SK-N-SH (cell line): ENCODE measurements at regions of chr3 and their contacts with region 1.

Region 1: GRCh38 chr3:141311496-141312353 is 56.6 kb upstream of the ZBTB38 start:
- DNase-seq: peak; percentile 91
- H3K4me3 ChIP-seq: peak overlapping the region; percentile 73 to 77
- H3K27ac ChIP-seq: peak overlapping the region; percentile 44 to 82; a peak in 3 of 4 replicates
- H3K4me1 ChIP-seq: peaks cover 0 to 15% of the 10 kb centered on the region in 2 experiments; a peak in 2 of 4 replicates
- H3K27me3 ChIP-seq: no peaks in the 10 kb centered on the region
- CTCF ChIP-seq: peak; percentile 76
- EP300 ChIP-seq: 0 out of 4 replicates have a peak, but pooled peaks of 1 of the 2 experiments have one; percentile 26
- RAD21 ChIP-seq: peak; percentile 83

Region 2: DNA sequence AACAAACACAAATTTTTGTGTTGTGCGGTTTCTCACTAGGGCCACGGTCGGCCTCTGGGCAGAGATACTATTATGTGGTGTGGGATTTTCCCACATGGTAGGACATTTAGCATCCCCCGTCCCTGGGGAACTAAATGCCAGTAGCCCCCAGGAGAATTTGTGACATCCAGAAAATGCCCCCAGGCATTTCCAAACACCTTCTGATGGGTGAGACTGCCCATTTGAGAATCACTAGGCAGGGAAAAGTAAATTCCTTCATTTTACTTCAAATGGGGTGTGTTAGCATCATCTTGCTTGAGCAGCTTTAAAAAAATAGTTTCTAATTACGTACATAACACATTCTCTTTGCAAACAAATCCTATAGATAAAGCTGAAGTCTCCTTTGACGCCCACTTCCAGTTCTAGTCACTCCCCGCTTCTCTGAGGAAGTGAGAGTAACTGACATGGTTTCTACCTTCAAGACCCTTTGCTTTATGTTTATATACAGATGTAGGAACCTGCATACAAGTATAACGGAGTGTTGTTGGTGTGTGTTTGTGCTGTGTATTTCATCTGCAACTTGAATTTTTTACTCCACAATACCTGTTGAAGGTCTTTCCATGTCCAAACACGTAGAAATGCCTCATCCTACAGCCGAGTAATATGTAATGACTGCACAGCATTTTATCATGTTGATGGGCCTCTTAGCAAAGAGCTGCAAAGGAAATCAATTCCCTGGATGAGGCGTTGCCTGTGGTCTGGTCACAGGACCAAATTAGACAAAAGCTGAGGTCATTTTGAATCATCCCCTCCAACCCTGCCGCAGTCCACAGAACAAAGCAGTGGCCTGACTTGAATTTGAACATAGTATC is 25.2 kb after region 1 on chr3:
- CTCF ChIA-PET with region 1: interaction called, 10 read pairs
- POLR2A ChIA-PET with region 1: no interaction called
- DNase-seq: no peak
- H3K4me3 ChIP-seq: no peak overlapping the region
- H3K27ac ChIP-seq: peak overlapping the region in 1 of 2 experiments; percentile 60; a peak in 2 of 4 replicates
- H3K4me1 ChIP-seq: peaks cover 4 to 16% of the 10 kb centered on the region in 2 experiments; a peak in 3 of 4 replicates
- H3K27me3 ChIP-seq: no peaks in the 10 kb centered on the region
- CTCF ChIP-seq: no peak
- EP300 ChIP-seq: no peak
- RAD21 ChIP-seq: no peak

Region 3: DNA sequence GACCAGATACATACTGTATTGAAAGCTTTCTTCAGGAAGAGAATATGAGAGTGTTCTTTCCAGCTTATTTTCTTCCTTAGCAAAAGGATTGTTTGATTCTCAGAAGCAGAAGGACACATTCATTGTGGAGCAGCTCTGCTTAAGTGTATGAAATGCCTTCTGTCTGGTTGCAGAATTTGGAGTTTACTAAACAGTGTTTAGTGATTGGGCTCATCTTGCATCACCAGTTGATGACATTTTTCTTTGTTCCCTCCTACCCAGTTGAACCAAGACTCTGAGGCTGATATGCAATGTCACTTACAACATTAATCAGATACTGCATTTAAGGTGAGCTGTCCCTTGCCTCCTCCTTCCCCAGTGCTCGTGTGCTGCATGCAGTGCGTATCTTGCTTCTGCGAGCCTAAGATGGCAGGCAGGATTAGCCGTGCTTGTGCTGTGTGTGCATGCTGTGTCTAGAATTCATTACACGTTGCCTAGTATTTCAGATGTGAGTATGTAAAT is 74.9 kb after region 1 on chr3:
- CTCF ChIA-PET with region 1: interaction called, 12 read pairs
- POLR2A ChIA-PET with region 1: interaction called, 5 read pairs
- DNase-seq: no peak
- H3K4me3 ChIP-seq: peak overlapping the region; percentile 19 to 45; a peak in 3 of 4 replicates
- H3K27ac ChIP-seq: peak overlapping the region; percentile 11 to 94; a peak in 3 of 4 replicates
- H3K4me1 ChIP-seq: peaks cover 7 to 19% of the 10 kb centered on the region in 2 experiments; a peak in 3 of 4 replicates
- H3K27me3 ChIP-seq: no peaks in the 10 kb centered on the region
- CTCF ChIP-seq: no peak
- EP300 ChIP-seq: no peak
- RAD21 ChIP-seq: 0 out of 2 replicates have a peak, but pooled peaks have one; percentile 9

Region 4: DNA sequence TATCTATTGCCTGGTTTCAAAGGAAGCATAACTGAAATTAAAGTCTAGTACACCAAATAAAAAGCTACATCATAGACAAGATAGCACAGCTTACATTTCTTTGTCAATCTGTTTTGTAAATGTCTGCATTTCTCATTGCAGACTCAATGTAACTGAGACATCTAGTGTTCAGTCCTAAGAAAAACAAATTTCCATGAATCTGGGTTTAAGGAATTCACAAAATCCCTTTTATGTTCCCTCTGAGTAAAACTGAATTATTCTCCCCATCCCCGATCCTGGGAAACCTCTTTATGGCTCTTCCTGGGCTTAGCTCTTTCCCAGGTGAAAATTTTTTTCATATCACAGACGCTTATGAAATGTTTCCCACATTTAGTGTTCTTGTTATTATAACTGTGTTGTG is 153.5 kb after region 1 on chr3:
- CTCF ChIA-PET with region 1: interaction called, 31 read pairs
- POLR2A ChIA-PET with region 1: no interaction called
- DNase-seq: peak; percentile 24
- H3K4me3 ChIP-seq: no peak overlapping the region
- H3K27ac ChIP-seq: no peak overlapping the region
- H3K4me1 ChIP-seq: no peaks in the 10 kb centered on the region
- H3K27me3 ChIP-seq: no peaks in the 10 kb centered on the region
- CTCF ChIP-seq: peak; percentile 44
- EP300 ChIP-seq: no peak
- RAD21 ChIP-seq: peak; percentile 65